Adrenal gland (tissue), 19 donors: ENCODE measurements at regions of chr1 and their contacts with region 1.

Region 1: DNA sequence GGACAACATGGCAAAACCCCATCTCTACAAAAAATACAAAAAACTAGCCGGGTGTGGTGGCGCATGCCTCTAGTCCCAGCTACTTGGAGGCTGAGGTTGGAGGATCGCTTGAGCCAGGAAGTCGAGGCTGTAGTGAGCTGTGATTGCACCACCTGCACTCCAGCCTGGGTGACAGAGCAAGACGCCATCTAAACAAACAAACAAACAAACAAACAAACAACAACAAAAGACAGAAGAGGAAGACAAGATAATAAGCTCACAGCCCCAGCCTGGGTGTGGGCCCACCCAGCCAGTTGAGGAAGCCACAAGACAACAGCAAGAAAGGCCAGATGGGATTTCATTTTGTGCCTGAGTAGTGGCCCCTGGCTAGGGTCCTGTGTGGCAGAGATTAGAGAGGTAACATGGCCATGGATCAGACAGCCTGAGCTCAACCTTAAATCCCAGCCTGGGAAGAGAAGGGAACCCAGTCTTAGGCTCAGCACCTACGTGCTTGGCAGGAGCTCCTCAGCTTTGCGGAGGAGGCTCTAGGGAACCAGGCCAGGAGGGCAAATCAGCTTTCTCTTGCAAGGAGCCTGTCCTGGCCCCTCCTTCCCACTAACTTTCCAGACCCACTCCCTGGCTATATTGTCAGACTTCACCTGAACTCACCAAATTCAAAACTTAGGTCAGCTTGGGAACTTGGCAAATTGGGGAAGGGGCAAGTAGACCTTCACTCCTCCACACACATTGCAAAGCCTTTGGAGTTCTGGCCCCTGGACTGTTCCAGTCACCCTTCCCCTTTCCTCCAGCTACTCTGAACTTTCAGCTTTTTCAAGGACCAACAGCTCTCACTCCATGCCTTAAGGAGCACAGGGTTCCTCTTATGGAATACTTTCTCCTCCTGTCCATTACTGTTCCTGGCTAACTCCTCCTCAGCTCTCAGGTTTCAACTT is 5.1 kb upstream of the BEST4 start:
- DNase-seq: peak in 5 of 7 donors; percentile 0 to 46 (median 12)
- H3K4me3 ChIP-seq: no peak overlapping the region
- H3K27ac ChIP-seq: no peak overlapping the region
- H3K4me1 ChIP-seq: no peaks in the 10 kb centered on the region
- H3K27me3 ChIP-seq: no peaks in the 10 kb centered on the region
- CTCF ChIP-seq: no peak
- POLR2A ChIP-seq: no peak

Region 2: DNA sequence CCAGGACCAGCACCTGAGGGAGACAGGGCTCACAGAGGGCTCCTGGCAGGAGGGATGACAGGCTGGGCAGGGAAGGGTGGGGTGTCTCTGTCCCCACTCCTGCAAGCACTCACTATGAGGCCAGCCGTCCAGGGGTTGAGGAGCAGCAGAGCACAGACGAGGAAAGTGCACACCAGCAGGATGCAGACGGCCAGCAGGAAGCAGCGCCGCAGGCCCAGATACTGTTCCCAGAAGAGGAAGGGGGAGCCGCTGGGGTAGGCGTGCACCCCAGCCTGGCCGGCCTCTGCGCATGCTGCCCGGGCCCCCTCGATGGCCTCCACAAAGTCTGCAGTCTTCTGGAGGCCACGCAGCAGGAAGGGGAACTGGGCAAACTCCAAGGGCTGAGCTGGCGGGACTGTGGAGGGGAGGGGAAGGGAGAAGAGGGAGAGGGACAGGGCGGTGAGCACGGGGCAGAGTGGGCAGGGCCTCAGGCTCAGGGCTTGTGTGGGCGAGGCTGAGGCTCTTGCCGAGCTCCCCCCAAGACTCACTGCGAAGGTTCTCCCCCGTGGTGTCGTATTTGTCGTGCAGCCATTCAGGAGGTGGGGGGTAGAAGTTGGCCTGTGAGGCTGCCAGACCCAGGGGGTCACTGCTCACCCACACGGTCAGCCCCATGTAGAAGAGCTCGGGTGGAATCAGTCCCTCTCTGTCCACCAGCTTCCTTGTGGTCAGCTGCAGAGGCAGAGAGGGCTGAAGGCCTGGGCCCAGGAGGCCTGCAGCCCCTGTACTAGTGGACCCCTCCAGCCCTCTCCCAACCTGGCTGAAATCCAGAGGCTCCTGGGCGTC is 33.5 kb after region 1 on chr1:
- intact Hi-C with region 1: loop called (anchors 5 kb)
- DNase-seq: peak in 5 of 7 donors; percentile 54 to 68 (median 61)
- H3K4me3 ChIP-seq: no peak overlapping the region
- H3K27ac ChIP-seq: peak overlapping the region in 2 of 5 donors; percentile 44 to 66
- H3K4me1 ChIP-seq: no peaks in the 10 kb centered on the region
- H3K27me3 ChIP-seq: no peaks in the 10 kb centered on the region
- CTCF ChIP-seq: no peak
- POLR2A ChIP-seq: no peak

Region 3: GRCh38 chr1:44884746-44885145 is 91.7 kb after region 1 on chr1:
- intact Hi-C with region 1: no loop called
- DNase-seq: peak in 5 of 7 donors; percentile 31 to 61 (median 47)
- H3K4me3 ChIP-seq: no peak overlapping the region
- H3K27ac ChIP-seq: peak overlapping the region in 2 of 5 donors; percentile 35 to 60
- H3K4me1 ChIP-seq: peaks cover 9 to 12% of the 10 kb centered on the region in 2 donors
- H3K27me3 ChIP-seq: no peaks in the 10 kb centered on the region
- CTCF ChIP-seq: no peak
- POLR2A ChIP-seq: no peak